SK-N-SH (cell line): ENCODE measurements at regions of chr7 and their contacts with region 1.

Region 1: GRCh38 chr7:129218514-129219062 is 6.2 kb upstream of the AHCYL2 start:
- DNase-seq: peak; percentile 90
- H3K4me3 ChIP-seq: peak overlapping the region in 1 of 2 experiments; percentile 25; a peak in 1 of 4 replicates
- H3K27ac ChIP-seq: no peak overlapping the region
- H3K4me1 ChIP-seq: peaks cover 0 to 8% of the 10 kb centered on the region in 2 experiments; a peak in 1 of 4 replicates
- H3K27me3 ChIP-seq: no peaks in the 10 kb centered on the region
- CTCF ChIP-seq: peak; percentile 99
- EP300 ChIP-seq: no peak
- RAD21 ChIP-seq: peak; percentile 99

Region 2: DNA sequence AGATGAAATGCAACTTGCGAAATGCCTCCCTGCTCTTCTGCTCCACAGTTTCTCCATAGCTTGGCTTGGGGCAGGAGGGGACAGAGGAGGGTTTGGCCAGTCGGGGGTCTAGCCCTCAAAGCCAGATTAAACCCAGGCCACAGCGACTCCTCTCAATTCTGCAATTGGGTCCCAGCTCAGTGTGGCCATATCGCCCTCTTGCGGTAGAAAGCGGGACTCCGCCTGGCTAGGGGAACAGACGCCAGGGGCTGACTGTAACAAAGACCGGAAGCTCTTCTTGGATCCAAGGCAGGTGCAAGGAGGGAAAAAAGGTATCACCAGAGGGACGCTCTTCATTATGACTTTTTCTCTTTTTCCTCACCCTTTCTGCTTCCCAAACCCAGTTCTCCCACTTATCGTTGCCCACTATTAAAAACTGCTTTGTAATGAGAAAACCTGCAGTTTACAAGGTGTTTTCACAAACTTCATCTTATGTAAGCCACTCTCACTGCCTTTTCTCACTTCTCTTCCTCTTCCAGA is 127.0 kb before region 1 on chr7:
- CTCF ChIA-PET with region 1: interaction called, 20 read pairs
- POLR2A ChIA-PET with region 1: no interaction called
- DNase-seq: peak; percentile 91
- H3K4me3 ChIP-seq: peak overlapping the region in 1 of 2 experiments; percentile 14; a peak in 1 of 4 replicates
- H3K27ac ChIP-seq: no peak overlapping the region
- H3K4me1 ChIP-seq: no peaks in the 10 kb centered on the region; a peak in 1 of 4 replicates
- H3K27me3 ChIP-seq: no peaks in the 10 kb centered on the region; the same call in 1 of the 2 replicates
- CTCF ChIP-seq: peak; percentile 100
- EP300 ChIP-seq: no peak
- RAD21 ChIP-seq: peak; percentile 100

Region 3: GRCh38 chr7:129193892-129194291 is 24.7 kb before region 1 on chr7:
- CTCF ChIA-PET with region 1: interaction called, 29 read pairs
- POLR2A ChIA-PET with region 1: no interaction called
- DNase-seq: no peak
- H3K4me3 ChIP-seq: no peak overlapping the region
- H3K27ac ChIP-seq: no peak overlapping the region
- H3K4me1 ChIP-seq: peaks cover 0 to 15% of the 10 kb centered on the region in 2 experiments; a peak in 2 of 4 replicates
- H3K27me3 ChIP-seq: no peaks in the 10 kb centered on the region
- CTCF ChIP-seq: no peak
- EP300 ChIP-seq: no peak
- RAD21 ChIP-seq: no peak

Region 4: GRCh38 chr7:129271500-129272355 is 53.1 kb after region 1 on chr7:
- CTCF ChIA-PET with region 1: interaction called, 91 read pairs
- POLR2A ChIA-PET with region 1: no interaction called
- DNase-seq: peak; percentile 57
- H3K4me3 ChIP-seq: no peak overlapping the region
- H3K27ac ChIP-seq: no peak overlapping the region
- H3K4me1 ChIP-seq: no peaks in the 10 kb centered on the region
- H3K27me3 ChIP-seq: no peaks in the 10 kb centered on the region
- CTCF ChIP-seq: peak; percentile 71
- EP300 ChIP-seq: peak in 1 of 2 experiments; percentile 48; a peak in 1 of 4 replicates
- RAD21 ChIP-seq: peak; percentile 81

Region 5: GRCh38 chr7:129327076-129327475 is 108.5 kb after region 1 on chr7:
- CTCF ChIA-PET with region 1: interaction called, 24 read pairs
- POLR2A ChIA-PET with region 1: no interaction called
- DNase-seq: no peak
- H3K4me3 ChIP-seq: no peak overlapping the region
- H3K27ac ChIP-seq: no peak overlapping the region
- H3K4me1 ChIP-seq: no peaks in the 10 kb centered on the region
- H3K27me3 ChIP-seq: no peaks in the 10 kb centered on the region
- CTCF ChIP-seq: no peak
- EP300 ChIP-seq: no peak
- RAD21 ChIP-seq: no peak

Region 6: DNA sequence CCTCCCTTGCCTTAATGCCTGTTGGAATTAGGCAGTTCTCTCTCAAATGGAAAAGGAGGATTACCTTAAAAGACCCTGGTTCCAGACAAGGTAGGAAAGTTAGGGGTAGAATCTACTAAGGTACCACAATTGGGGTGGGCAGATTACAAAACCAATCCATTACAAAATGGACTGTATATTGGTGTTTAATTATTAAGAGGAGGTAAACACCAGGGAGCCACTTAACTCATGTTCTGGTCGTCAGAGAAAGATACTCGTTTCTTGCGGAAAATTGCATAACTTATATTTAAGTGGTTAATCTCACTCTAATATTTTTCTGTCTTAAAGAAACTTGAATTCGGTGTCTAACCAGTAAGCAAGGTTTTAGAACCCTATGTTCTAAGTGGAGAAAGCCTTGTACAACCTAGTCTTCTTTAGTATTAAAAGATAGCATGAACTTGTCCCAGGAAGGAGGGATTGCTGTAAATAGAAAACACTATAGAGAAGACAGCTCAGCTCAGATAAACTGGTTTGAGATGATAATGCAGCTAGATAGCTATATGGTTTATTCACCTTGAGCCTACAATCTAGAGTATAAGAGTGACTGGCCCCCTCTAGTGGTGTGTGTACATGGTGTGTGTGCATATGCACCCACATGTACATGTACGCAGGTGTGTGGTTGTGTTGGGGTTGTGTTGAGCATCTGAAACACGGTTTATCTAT is 157.6 kb after region 1 on chr7:
- CTCF ChIA-PET with region 1: interaction called, 66 read pairs
- POLR2A ChIA-PET with region 1: no interaction called
- DNase-seq: peak; percentile 52
- H3K4me3 ChIP-seq: no peak overlapping the region
- H3K27ac ChIP-seq: no peak overlapping the region
- H3K4me1 ChIP-seq: no peaks in the 10 kb centered on the region
- H3K27me3 ChIP-seq: no peaks in the 10 kb centered on the region
- CTCF ChIP-seq: peak; percentile 74
- EP300 ChIP-seq: no peak
- RAD21 ChIP-seq: peak; percentile 49

Region 7: DNA sequence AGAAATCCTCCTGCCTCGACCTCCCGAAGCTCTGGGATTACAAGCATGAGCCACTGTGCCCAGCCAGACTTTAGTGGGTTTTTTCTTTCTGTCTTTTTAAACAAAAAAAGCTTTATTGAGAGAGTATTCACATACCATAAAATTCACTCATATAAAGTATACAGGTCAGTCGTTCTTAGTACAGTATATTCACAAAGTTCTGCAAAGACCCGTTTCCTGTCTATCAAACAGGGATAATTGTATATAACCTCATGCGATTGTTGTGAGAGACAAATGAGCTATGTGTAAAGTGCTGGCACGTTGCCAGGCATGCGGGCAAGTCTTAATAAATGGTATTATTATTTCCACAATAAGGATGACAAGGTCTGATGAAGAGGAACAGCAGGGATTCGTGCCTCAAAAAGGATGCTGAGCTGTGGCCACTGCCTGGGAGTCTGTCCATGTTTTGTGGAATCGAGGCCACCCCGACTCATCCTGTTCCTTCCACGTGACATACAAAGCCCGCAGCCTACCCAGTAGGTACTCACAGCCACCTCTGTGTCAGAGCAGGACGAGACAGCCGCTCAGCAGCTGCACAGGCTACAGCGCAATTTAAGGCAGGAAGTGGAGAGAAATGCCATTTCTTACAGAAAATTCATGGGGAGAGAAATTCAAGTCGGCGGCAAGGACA is 335.4 kb after region 1 on chr7:
- CTCF ChIA-PET with region 1: interaction called, 11 read pairs
- POLR2A ChIA-PET with region 1: no interaction called
- DNase-seq: no peak
- H3K4me3 ChIP-seq: peak overlapping the region in 1 of 2 experiments; percentile 7; a peak in 1 of 4 replicates
- H3K27ac ChIP-seq: no peak overlapping the region
- H3K4me1 ChIP-seq: peaks cover 0 to 7% of the 10 kb centered on the region in 2 experiments; a peak in 1 of 4 replicates
- H3K27me3 ChIP-seq: no peaks in the 10 kb centered on the region
- CTCF ChIP-seq: no peak
- EP300 ChIP-seq: no peak; a peak in 1 of 4 replicates
- RAD21 ChIP-seq: no peak